Ascending aorta (tissue), 2 donors: ENCODE measurements at regions of chrX and their contacts with region 1.

Region 1: GRCh38 chrX:151753313-151754041 is 18.9 kb downstream of the CNGA2 start:
- DNase-seq: no peak
- H3K4me3 ChIP-seq: no peak overlapping the region
- H3K27ac ChIP-seq: no peak overlapping the region
- H3K4me1 ChIP-seq: no peaks in the 10 kb centered on the region
- H3K27me3 ChIP-seq: no peaks in the 10 kb centered on the region
- CTCF ChIP-seq: peak; percentile 59 to 77 (median 72)

Region 2: DNA sequence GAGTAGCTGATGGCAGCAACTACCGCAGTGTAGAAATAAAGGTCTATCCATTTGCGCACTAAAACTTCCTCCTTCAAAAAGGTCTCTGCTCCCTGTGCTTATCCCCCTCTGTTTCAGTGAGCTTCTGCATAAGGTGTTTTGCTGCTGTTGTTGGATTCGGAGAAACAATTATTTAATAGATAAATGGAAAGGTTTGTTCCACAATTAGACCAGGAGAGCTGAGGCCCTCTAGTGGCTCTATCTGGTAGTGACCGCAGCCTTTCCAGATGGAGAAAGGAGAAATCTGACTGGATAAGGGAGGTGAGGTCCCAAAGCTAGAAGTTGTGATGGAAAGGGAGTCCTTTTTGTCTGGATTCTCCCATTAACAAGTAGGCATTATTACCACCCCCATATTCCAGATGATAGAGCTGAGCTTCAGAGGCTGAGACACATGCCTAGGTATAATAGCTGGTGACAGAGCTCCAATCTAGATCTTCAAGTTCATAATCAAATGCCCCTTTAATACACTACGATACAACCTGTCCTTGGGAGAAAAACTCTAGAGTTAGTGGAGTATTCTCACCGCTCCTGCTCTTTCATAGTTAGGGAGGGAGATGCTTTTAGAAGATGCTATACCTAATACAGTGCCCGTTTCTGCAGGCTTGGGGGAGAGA is 879.1 kb after region 1 on chrX:
- intact Hi-C with region 1: loop called (anchors 1 kb)
- DNase-seq: peak in 1 of 2 donors; percentile 67
- H3K4me3 ChIP-seq: no peak overlapping the region
- H3K27ac ChIP-seq: no peak overlapping the region
- H3K4me1 ChIP-seq: no peaks in the 10 kb centered on the region
- H3K27me3 ChIP-seq: no peaks in the 10 kb centered on the region
- CTCF ChIP-seq: peak; percentile 37 to 64 (median 58)